ENCODE measurements at regions of chr19 and their contacts with region 1.

Region 1: GRCh38 chr19:15555759-15556633 is 47.7 kb downstream of the CYP4F22 start:
- DNase-seq: peak; percentile 83 to 92 (median 86)
- ATAC-seq: peak; percentile 86
- H3K4me3 ChIP-seq: no peak overlapping the region
- H3K27ac ChIP-seq: no peak overlapping the region
- H3K4me1 ChIP-seq: peaks cover 15% of the 10 kb centered on the region
- H3K27me3 ChIP-seq: peaks cover 0 to 3% of the 10 kb centered on the region in 2 donors
- CTCF ChIP-seq: peak; percentile 45 to 92 (median 87)
- POLR2A ChIP-seq: peak in 1 of 3 donors; percentile 8

Region 2: GRCh38 chr19:15177269-15178116 is 378.5 kb before region 1 on chr19:
- intact Hi-C with region 1: loop called (anchors 5 kb)
- DNase-seq: peak; percentile 79 to 87 (median 82)
- ATAC-seq: peak; percentile 86
- H3K4me3 ChIP-seq: no peak overlapping the region
- H3K27ac ChIP-seq: no peak overlapping the region
- H3K4me1 ChIP-seq: peaks cover 9% of the 10 kb centered on the region
- H3K27me3 ChIP-seq: no peaks in the 10 kb centered on the region
- CTCF ChIP-seq: peak; percentile 87 to 99 (median 96)
- POLR2A ChIP-seq: no peak

Region 3: DNA sequence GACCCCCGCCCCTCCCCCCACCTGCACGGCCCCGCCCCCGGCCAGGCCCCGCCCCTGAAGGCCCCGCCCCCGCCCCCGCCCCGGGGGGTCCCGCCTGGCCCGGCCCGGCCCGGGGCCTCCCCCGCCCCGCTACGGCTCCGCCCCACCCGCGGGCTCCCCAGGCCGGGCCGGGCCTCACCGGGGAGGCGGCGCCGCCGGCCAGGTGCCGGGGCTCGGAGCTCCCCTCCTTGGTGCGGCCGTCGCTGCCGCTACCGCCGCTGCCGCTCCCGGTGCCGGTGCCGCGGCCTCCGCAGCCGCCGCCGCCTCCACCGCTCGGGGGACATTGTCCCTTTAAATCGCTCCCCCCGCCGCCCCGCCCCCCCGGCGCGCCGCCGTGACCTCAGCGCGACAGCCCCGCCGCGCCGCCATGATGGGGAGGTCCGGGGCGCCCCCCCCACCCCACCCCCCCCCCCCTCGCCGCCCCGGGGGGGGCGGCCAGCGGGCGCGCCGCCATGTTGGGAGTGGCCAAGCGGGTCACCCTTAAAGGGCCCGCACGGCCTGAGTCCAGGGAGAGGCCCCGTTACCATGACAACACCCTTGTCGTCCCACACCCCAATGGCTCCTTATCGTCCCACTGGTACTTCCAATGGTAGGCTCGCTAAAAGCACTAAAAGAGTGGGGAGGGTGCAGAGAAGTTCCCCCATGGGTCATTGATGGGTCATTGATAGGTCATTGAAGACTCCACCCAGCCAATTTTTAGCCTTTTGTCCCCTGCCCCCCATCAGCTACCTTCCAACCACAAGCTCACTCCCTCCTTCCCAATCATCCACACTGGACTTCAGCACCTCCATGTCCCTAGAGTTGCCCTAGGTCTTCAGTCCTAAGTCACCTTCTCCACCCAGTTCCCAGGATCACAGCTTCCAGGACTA is 106.1 kb before region 1 on chr19 and contains the start of gene WIZ:
- intact Hi-C with region 1: loop called (anchors 10 kb)
- DNase-seq: peak; percentile 85 to 90 (median 88)
- ATAC-seq: peak; percentile 73
- H3K4me3 ChIP-seq: peak within 1 kb of the TSS; percentile 50 to 65
- H3K27ac ChIP-seq: peak within 1 kb of the TSS; percentile 18 to 70 (median 61)
- H3K4me1 ChIP-seq: peaks cover 30% of the 10 kb centered on the region
- H3K27me3 ChIP-seq: no peaks in the 10 kb centered on the region
- CTCF ChIP-seq: no peak
- POLR2A ChIP-seq: no peak
- total RNA-seq, gene WIZ: 16.1 to 111 TPM

Measured in body of pancreas (tissue), 4 donors.